SK-MEL-5 (cell line): ENCODE measurements at regions of chr13 and their contacts with region 1.

Region 1: GRCh38 chr13:51714663-51715168 is 89.2 kb downstream of the DHRS12 start:
- DNase-seq: no peak

Region 2: DNA sequence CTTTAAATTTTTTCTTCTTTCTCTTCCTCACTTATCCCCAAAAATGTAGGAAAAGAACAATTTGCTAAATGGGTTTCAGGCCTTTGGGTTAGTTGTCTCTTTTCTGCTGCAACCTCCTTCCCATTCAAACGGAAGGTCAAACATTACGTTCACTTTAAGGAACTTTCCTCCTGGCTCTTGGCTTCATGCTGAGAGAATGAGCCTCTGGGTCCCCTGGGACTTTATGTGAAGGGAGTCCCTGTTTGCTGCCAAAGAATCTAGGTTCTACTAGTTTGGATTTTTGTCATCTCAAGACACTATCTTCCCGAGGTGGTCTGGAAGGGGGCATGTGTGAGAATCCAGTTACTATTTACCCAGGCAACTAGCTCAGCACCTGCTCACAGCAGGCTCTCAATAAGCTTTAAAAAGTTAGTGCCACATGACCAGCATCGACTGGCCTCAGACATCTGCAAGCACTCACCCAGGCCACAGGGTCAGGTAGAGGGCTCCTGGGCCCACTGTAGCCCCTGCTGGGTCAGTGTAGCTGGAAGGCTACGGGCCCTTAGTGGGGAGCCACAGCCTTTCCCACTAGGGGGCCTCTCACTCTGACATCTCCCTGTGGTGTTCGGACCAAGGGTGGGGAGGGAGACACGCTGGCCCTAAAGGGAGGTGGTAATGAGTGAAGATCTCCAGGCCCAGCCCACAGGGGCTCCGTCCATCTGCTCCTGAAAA is 452.1 kb before region 1 on chr13:
- in situ Hi-C with region 1: no loop called
- DNase-seq: peak; percentile 55

Region 3: DNA sequence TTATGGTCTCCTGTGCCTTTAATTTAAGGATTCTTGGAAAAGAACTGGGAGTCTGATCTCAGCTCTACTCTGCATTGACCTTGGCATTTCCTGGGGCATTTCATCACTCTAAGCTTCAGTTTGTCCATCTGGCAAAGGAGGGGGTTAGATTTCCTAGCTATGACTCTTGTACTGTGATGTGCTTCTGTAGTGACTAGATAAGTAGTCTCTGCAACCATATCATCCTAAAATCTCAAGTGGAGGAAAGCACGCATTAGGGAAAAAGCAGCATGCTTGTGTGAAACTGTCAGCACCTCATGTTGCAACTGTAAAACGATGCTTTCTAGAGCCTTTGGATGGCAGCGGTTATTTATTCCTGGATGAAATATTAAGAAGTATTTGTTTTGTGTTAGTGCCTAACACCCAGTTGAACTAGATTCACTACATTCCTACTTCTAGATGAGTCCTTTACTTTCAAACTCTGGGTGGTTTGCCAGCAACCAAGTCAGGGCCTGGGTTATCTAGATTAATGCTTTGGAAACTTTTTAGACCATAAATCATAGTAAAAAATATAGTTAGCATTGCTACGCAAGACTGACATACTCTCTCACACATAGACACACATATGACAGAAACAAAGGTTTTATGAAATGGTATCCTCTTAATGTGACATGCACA is 123.6 kb before region 1 on chr13:
- in situ Hi-C with region 1: loop called (anchors 10 kb)
- DNase-seq: peak; percentile 80

Region 4: DNA sequence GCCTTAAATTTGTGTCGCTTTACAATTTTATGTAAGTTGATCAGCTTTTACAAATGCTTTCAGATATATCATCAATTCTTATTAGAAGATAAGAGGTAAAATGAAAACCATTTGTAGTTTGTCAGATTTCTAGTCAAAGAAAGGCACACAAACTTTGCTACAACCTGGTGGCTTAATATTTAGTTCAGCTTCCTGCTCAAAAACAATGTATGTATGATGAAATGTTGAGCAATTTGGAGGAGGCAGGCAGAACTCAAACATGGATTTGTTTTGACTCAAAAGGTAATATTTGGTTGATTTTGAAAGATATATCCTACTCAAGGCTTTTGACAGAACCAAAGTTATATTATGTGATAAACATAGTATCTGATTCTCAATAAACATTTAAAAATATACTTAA is 389.9 kb after region 1 on chr13:
- in situ Hi-C with region 1: no loop called
- DNase-seq: no peak